ENCODE measurements at regions of chr1 and their contacts with region 1.

Region 1: DNA sequence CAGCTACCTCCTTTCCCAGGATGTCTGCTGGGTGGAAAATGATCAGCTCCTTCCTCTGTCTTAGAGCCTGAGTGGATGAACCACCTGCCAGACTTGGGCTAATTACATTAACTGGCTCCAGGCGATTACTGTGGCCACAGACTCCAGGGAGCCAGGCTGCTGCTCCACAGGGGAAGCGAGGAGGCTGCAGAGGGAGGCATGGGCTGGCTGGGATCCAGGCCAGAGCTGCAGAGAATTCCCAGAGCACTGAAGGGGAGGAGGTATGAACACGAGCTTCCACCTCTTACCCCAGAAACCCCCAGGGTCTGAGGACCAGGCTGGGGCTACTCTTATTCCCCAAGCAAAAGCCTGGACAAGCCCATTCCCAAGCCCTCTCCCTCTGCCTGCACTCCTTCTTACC is 136.0 kb upstream of the KLHDC7A start:
- DNase-seq: no peak
- ATAC-seq: peak; percentile 51; the same call in 1 of the 2 replicates
- H3K4me3 ChIP-seq: no peak overlapping the region
- H3K27ac ChIP-seq: no peak overlapping the region
- H3K4me1 ChIP-seq: no peaks in the 10 kb centered on the region
- H3K27me3 ChIP-seq: peaks cover 2% of the 10 kb centered on the region; the same call in 1 of the 2 replicates
- CTCF ChIP-seq: no peak

Region 2: GRCh38 chr1:18062180-18062579 is 282.6 kb before region 1 on chr1:
- CTCF ChIA-PET with region 1: no interaction called
- POLR2A ChIA-PET with region 1: no interaction called
- in situ Hi-C with region 1: no loop called
- intact Hi-C with region 1: no loop called
- DNase-seq: no peak
- ATAC-seq: no peak
- H3K4me3 ChIP-seq: no peak overlapping the region
- H3K27ac ChIP-seq: no peak overlapping the region
- H3K4me1 ChIP-seq: no peaks in the 10 kb centered on the region
- H3K27me3 ChIP-seq: peaks cover 6% of the 10 kb centered on the region; the same call in 1 of the 2 replicates
- CTCF ChIP-seq: no peak

Region 3: DNA sequence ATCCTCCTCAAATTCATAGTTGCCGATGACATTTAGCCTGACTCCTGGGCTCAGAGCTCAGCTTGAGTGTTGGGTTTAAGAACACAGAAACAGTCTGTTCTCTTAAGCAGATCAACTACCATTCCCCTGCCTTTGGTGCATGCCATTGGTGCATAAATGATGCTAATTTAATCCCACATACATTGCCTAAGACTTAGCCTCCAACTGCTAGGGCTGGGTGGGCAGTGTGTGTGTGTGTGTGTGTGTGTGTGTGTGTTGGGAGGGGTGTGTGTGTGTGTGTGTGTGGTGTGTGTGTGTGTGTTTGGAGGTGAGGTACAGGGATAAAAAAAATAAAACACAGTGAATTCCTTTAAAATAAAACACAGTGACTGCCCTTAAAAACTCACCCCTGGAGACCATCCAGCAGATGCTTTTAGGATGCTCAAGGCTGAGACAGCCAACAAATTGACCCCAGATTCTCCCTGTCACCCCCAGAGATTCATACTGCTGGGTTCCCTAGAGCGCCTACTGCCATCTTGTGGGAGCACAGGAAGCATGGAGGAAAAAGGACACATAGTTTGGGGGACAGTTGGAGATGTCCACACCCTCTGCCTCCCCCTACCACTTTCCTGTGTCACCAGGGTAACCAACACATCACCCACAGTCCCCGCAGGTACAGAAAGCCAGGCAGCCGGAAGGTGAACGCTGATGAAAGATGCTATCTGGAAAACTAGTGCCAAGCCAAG is 166.6 kb after region 1 on chr1:
- CTCF ChIA-PET with region 1: interaction called, 10 read pairs
- POLR2A ChIA-PET with region 1: no interaction called
- in situ Hi-C with region 1: no loop called
- intact Hi-C with region 1: no loop called
- DNase-seq: no peak
- ATAC-seq: no peak
- H3K4me3 ChIP-seq: no peak overlapping the region
- H3K27ac ChIP-seq: no peak overlapping the region
- H3K4me1 ChIP-seq: no peaks in the 10 kb centered on the region
- H3K27me3 ChIP-seq: peaks cover 9% of the 10 kb centered on the region; the same call in 1 of the 2 replicates
- CTCF ChIP-seq: peak; percentile 51; the same call in 1 of the 2 replicates

Measured in Panc1 (cell line).